Common myeloid progenitor, CD34-positive (primary cell): ENCODE measurements at regions of chr6 and their contacts with region 1.

Region 1: GRCh38 chr6:73129653-73130443 is 95.4 kb downstream of the KHDC1L start:
- DNase-seq: peak; percentile 73 to 85 (median 83)
- H3K4me3 ChIP-seq: peak overlapping the region in 4 of 7 experiments; percentile 16 to 64 (median 44)
- H3K27ac ChIP-seq: no peak overlapping the region
- H3K4me1 ChIP-seq: peaks cover 0 to 2% (median 0%) of the 10 kb centered on the region in 4 experiments
- H3K27me3 ChIP-seq: no peaks in the 10 kb centered on the region

Region 2: GRCh38 chr6:72411872-72412708 is 717.8 kb before region 1 on chr6:
- CTCF ChIA-PET with region 1: interaction called, 16 read pairs
- POLR2A ChIA-PET with region 1: no interaction called
- DNase-seq: peak; percentile 81 to 89 (median 84)
- H3K4me3 ChIP-seq: no peak overlapping the region
- H3K27ac ChIP-seq: no peak overlapping the region
- H3K4me1 ChIP-seq: peaks cover 0 to 11% (median 6%) of the 10 kb centered on the region in 4 experiments
- H3K27me3 ChIP-seq: peaks cover 0 to 3% (median 0%) of the 10 kb centered on the region in 5 experiments

Region 3: GRCh38 chr6:72622094-72622940 is 507.5 kb before region 1 on chr6:
- CTCF ChIA-PET with region 1: interaction called, 173 read pairs
- POLR2A ChIA-PET with region 1: no interaction called
- DNase-seq: peak; percentile 81 to 92 (median 86)
- H3K4me3 ChIP-seq: peak overlapping the region; percentile 59 to 90 (median 85)
- H3K27ac ChIP-seq: peak overlapping the region in 1 of 2 experiments; percentile 55
- H3K4me1 ChIP-seq: peaks cover 9 to 50% (median 42%) of the 10 kb centered on the region in 4 experiments
- H3K27me3 ChIP-seq: peaks cover 0 to 4% (median 0%) of the 10 kb centered on the region in 5 experiments

Region 4: GRCh38 chr6:73236147-73236750 is 106.4 kb after region 1 on chr6:
- CTCF ChIA-PET with region 1: no interaction called
- POLR2A ChIA-PET with region 1: no interaction called
- DNase-seq: no peak
- H3K4me3 ChIP-seq: no peak overlapping the region
- H3K27ac ChIP-seq: no peak overlapping the region
- H3K4me1 ChIP-seq: no peaks in the 10 kb centered on the region
- H3K27me3 ChIP-seq: no peaks in the 10 kb centered on the region